Upper lobe of right lung (tissue), 1 donor: ENCODE measurements at regions of chr14 and their contacts with region 1.

Region 1: DNA sequence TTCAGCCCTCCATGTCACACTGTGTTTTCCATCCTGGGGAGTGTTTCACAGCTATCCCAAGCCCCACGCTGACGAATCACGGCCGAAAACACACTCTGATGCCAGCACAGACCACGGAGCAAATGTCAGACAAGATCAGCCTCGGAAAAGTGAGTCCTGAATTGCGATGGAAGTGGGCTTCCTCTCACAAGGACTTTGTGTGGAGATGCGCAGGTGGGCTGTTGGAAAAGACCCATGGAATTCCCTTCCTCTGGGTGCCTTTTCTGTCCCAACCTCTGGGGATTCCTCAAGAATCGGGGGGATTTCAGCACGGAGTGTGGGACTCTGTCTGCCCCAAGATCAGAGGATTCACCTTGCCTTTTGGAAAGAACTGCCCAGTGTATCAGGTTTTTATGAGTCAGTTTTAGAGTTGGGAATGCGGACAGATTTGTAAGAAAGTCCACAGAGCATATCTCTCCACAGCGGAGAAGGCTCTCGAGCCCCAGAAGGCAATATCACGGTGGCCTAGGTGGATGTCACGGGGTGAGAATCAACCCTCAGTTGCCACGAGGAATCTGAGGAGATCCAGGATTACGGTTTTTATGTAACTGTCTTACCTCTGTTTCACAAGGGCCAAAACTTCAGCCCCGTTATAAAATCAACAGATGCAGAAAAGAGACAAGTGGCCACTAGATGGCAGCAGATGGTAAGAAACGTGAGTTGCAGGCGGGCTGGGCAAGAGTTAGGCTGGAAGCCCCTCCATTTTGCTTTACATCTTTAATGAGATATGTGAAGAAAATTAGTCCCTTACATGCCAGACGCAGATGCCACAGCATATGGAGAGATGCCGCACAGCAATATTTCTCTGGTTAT is 201.9 kb downstream of the DAD1 start:
- DNase-seq: no peak
- ATAC-seq: peak; percentile 66
- H3K4me3 ChIP-seq: no peak overlapping the region
- H3K27ac ChIP-seq: no peak overlapping the region
- H3K4me1 ChIP-seq: no peaks in the 10 kb centered on the region
- H3K27me3 ChIP-seq: no peaks in the 10 kb centered on the region
- CTCF ChIP-seq: peak; percentile 82

Region 2: GRCh38 chr14:22177870-22178269 is 209.3 kb before region 1 on chr14:
- intact Hi-C with region 1: no loop called
- DNase-seq: no peak
- ATAC-seq: no peak
- H3K4me3 ChIP-seq: no peak overlapping the region
- H3K27ac ChIP-seq: no peak overlapping the region
- H3K4me1 ChIP-seq: no peaks in the 10 kb centered on the region
- H3K27me3 ChIP-seq: no peaks in the 10 kb centered on the region
- CTCF ChIP-seq: no peak

Region 3: GRCh38 chr14:22333422-22334276 is 53.5 kb before region 1 on chr14:
- intact Hi-C with region 1: no loop called
- DNase-seq: no peak
- ATAC-seq: peak; percentile 69
- H3K4me3 ChIP-seq: no peak overlapping the region
- H3K27ac ChIP-seq: no peak overlapping the region
- H3K4me1 ChIP-seq: peaks cover 9% of the 10 kb centered on the region
- H3K27me3 ChIP-seq: no peaks in the 10 kb centered on the region
- CTCF ChIP-seq: no peak

Region 4: GRCh38 chr14:22472935-22473854 is 86.0 kb after region 1 on chr14:
- intact Hi-C with region 1: loop called (anchors 5 kb)
- DNase-seq: no peak
- ATAC-seq: peak; percentile 77
- H3K4me3 ChIP-seq: no peak overlapping the region
- H3K27ac ChIP-seq: no peak overlapping the region
- H3K4me1 ChIP-seq: no peaks in the 10 kb centered on the region
- H3K27me3 ChIP-seq: no peaks in the 10 kb centered on the region
- CTCF ChIP-seq: peak; percentile 66

Region 5: GRCh38 chr14:22556990-22557623 is 170.0 kb after region 1 on chr14:
- intact Hi-C with region 1: loop called (anchors 10 kb)
- DNase-seq: peak; percentile 94
- ATAC-seq: peak; percentile 81
- H3K4me3 ChIP-seq: peak overlapping the region; percentile 14
- H3K27ac ChIP-seq: peak overlapping the region; percentile 72
- H3K4me1 ChIP-seq: peaks cover 57% of the 10 kb centered on the region
- H3K27me3 ChIP-seq: no peaks in the 10 kb centered on the region
- CTCF ChIP-seq: peak; percentile 98